Colonic mucosa (tissue), 4 donors: ENCODE measurements at regions of chr22 and their contacts with region 1.

Region 1: GRCh38 chr22:49667236-49667635 is 160.4 kb downstream of the BRD1 start:
- DNase-seq: no peak
- H3K4me3 ChIP-seq: no peak overlapping the region
- H3K27ac ChIP-seq: no peak overlapping the region
- H3K4me1 ChIP-seq: no peaks in the 10 kb centered on the region
- H3K27me3 ChIP-seq: peaks cover 21% of the 10 kb centered on the region
- CTCF ChIP-seq: no peak

Region 2: GRCh38 chr22:49600891-49601431 is 66.3 kb before region 1 on chr22:
- intact Hi-C with region 1: loop called (anchors 10 kb)
- DNase-seq: no peak
- H3K4me3 ChIP-seq: no peak overlapping the region
- H3K27ac ChIP-seq: no peak overlapping the region
- H3K4me1 ChIP-seq: no peaks in the 10 kb centered on the region
- H3K27me3 ChIP-seq: no peaks in the 10 kb centered on the region
- CTCF ChIP-seq: no peak